CD14-positive monocyte (primary cell): ENCODE measurements at regions of chr16 and their contacts with region 1.

Region 1: GRCh38 chr16:22321339-22322001 is 24.3 kb downstream of the POLR3E start:
- DNase-seq: peak; percentile 44 to 59 (median 57)
- H3K4me3 ChIP-seq: no peak overlapping the region
- H3K4me3 Mint-ChIP-seq: no peak overlapping the region
- H3K27ac ChIP-seq: no peak overlapping the region
- H3K27ac Mint-ChIP-seq: no peak overlapping the region
- H3K4me1 ChIP-seq: no peaks in the 10 kb centered on the region
- H3K4me1 Mint-ChIP-seq: no peaks in the 10 kb centered on the region
- H3K27me3 ChIP-seq: no peaks in the 10 kb centered on the region
- H3K27me3 Mint-ChIP-seq: peaks cover 0 to 2% (median 0%) of the 10 kb centered on the region in 3 donors
- CTCF ChIP-seq: peak; percentile 96

Region 2: DNA sequence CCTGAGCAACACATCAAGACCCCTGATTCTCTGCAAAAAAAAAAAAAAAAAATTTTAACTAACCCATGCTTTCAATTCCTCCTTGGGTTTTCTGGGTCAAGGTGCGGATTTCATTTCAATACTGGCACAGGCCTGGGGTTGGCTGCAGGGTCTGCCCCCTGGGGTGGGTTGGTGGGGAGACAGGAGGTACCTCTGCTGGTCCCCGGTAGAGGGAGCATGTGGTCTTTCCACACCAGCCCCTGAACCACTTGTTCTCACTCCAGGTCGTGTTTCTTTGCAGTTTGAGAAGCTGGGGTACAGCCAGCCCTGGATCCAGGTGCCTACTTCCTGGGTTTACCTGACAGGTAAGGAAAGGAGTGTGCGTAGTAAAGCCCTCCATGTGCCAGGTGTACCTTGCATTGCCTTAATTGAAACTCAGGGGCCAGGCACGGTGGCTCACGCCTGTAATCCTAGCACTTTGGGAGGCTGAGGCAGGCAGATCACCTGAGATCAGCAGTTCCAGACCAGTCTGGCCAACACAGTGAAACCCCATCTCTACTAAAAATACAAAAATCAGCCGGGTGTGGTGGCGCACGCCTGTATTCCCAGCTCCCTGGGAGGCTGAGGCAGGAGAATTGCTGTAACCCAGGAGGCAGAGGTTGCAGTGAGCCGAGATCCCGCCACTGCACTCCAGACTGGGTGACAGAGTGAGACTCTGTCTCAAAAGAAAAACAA is 137.4 kb before region 1 on chr16:
- intact Hi-C with region 1: no loop called
- DNase-seq: no peak
- H3K4me3 ChIP-seq: no peak overlapping the region
- H3K4me3 Mint-ChIP-seq: no peak overlapping the region
- H3K27ac ChIP-seq: no peak overlapping the region
- H3K27ac Mint-ChIP-seq: no peak overlapping the region
- H3K4me1 ChIP-seq: peaks cover 5% of the 10 kb centered on the region in 2 donors
- H3K4me1 Mint-ChIP-seq: peaks cover 7% of the 10 kb centered on the region
- H3K27me3 ChIP-seq: no peaks in the 10 kb centered on the region
- H3K27me3 Mint-ChIP-seq: peaks cover 5 to 9% (median 8%) of the 10 kb centered on the region in 3 donors
- CTCF ChIP-seq: no peak

Region 3: DNA sequence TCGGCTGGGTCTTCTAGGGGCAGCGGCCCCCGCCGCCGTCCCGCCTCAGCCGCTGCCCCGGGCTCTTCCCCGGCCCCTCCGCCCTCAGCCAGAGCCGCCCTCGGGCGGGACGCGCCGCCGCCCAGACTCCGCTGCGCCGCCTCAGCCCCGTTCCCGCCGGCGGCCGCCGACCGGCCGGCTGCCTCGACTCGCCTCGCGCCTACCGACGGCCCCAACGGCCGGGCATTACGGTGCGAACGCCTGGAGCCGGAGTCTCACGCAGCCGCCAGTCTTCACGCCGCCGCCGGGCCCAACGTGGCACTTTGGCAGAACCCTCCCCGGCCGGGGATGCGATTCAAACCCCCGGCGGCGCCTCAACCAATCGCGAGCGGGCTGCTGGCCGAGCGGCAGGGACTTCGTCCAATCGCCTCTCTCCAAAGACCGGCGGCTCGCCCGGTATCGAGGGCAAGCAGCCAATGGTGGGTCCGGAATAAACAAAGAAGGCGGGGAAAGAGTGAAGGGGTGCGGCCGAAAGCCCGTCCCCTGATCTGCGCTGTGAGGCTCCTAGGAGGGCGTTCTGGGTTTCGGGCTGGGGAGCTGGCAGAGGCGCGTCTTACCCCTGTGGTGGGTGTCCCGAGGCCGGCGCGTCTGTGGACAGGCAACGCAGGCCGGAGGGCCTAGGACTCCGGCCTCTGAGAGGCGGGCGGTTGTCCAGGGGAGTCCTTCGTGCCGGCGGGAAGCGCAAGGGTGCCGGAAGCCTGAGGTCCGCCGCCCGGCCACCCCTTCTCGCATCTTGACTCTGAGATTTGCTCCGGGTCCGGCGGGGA is 53.0 kb after region 1 on chr16 and contains the start of gene CDR2:
- intact Hi-C with region 1: loop called in 1 of 2 experiments (anchors 10 kb)
- DNase-seq: peak; percentile 92 to 95 (median 93)
- H3K4me3 ChIP-seq: peak within 1 kb of the TSS; percentile 56 to 87 (median 69)
- H3K4me3 Mint-ChIP-seq: peak within 1 kb of the TSS; percentile 96
- H3K27ac ChIP-seq: peak within 1 kb of the TSS in 1 of 2 donors; percentile 54
- H3K27ac Mint-ChIP-seq: peak within 1 kb of the TSS in 6 of 7 donors; percentile 32 to 85 (median 78)
- H3K4me1 ChIP-seq: peaks cover 33 to 54% of the 10 kb centered on the region in 2 donors
- H3K4me1 Mint-ChIP-seq: peaks cover 47% of the 10 kb centered on the region
- H3K27me3 ChIP-seq: no peaks in the 10 kb centered on the region
- H3K27me3 Mint-ChIP-seq: peaks cover 3 to 9% (median 3%) of the 10 kb centered on the region in 3 donors
- CTCF ChIP-seq: no peak
- polyA plus RNA-seq, gene CDR2: 2.5 to 5.9 (median 4.8) TPM

Region 4: DNA sequence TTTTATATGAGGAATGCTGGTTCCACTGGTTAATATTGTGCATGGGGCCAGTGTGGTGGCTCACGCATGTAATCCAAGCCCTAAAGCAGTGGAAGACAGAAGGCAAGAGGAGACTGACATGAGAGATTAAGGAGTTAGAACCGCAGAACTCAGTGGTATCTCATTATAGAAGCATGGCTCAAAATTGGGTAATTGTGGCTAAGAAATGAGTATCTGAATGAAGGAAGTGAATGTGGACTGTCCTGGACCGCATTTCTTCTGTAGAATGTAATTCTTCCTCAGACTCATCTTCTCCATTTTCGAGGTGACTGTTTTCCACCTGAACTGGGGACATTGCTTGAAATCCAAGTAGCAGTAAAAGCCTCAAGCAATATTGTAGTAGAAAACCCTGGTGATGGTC is 95.5 kb after region 1 on chr16:
- intact Hi-C with region 1: loop called in 1 of 2 experiments (anchors 10 kb)
- DNase-seq: peak in 2 of 3 donors; percentile 9 to 10
- H3K4me3 ChIP-seq: no peak overlapping the region
- H3K4me3 Mint-ChIP-seq: no peak overlapping the region
- H3K27ac ChIP-seq: no peak overlapping the region
- H3K27ac Mint-ChIP-seq: peak overlapping the region in 2 of 7 donors; percentile 11 to 73
- H3K4me1 ChIP-seq: peaks cover 8% of the 10 kb centered on the region in 2 donors
- H3K4me1 Mint-ChIP-seq: peaks cover 10% of the 10 kb centered on the region
- H3K27me3 ChIP-seq: no peaks in the 10 kb centered on the region
- H3K27me3 Mint-ChIP-seq: peaks cover under 1 to 3% (median 2%) of the 10 kb centered on the region in 3 donors
- CTCF ChIP-seq: no peak